CD8-positive, alpha-beta T cell (primary cell): ENCODE measurements at regions of chr6 and their contacts with region 1.

Region 1: GRCh38 chr6:108526739-108527174 is 34.0 kb upstream of the FOXO3 start:
- DNase-seq: peak in 2 of 9 experiments; percentile 36 to 56
- ATAC-seq: peak; percentile 38
- H3K4me3 ChIP-seq: no peak overlapping the region
- H3K4me3 Mint-ChIP-seq: no peak overlapping the region
- H3K27ac ChIP-seq: no peak overlapping the region
- H3K27ac Mint-ChIP-seq: no peak overlapping the region
- H3K4me1 ChIP-seq: no peaks in the 10 kb centered on the region
- H3K4me1 Mint-ChIP-seq: no peaks in the 10 kb centered on the region
- H3K27me3 ChIP-seq: no peaks in the 10 kb centered on the region
- H3K27me3 Mint-ChIP-seq: no peaks in the 10 kb centered on the region
- CTCF ChIP-seq: peak; percentile 63

Region 2: DNA sequence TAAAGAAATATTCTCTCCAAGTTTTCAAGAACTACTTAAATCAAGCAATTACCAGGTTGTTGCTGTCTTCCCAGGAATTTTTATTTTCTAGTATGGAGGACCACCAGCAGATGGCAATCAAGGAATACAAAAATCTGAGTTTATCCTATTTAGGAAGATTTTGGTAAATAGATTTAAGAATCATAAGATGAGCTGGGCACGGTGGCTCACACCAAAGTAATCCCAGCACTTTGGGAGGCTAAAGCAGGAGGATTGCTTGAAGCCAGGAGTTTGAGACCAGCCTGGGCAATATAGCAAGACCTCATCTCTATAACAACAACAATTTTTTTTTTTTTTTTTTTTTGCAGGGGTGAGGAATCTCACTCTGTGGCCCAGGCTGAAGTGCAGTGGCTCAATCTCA is 549.5 kb before region 1 on chr6:
- CTCF ChIA-PET with region 1: interaction called, 4 read pairs
- POLR2A ChIA-PET with region 1: no interaction called
- intact Hi-C with region 1: loop called in 1 of 2 experiments (anchors 5 kb)
- DNase-seq: peak in 1 of 9 experiments; percentile 22
- ATAC-seq: no peak
- H3K4me3 ChIP-seq: no peak overlapping the region
- H3K4me3 Mint-ChIP-seq: no peak overlapping the region
- H3K27ac ChIP-seq: no peak overlapping the region
- H3K27ac Mint-ChIP-seq: no peak overlapping the region
- H3K4me1 ChIP-seq: no peaks in the 10 kb centered on the region
- H3K4me1 Mint-ChIP-seq: peaks cover 2% of the 10 kb centered on the region
- H3K27me3 ChIP-seq: no peaks in the 10 kb centered on the region
- H3K27me3 Mint-ChIP-seq: peaks cover 4% of the 10 kb centered on the region
- CTCF ChIP-seq: no peak

Region 3: GRCh38 chr6:108113557-108114519 is 412.9 kb before region 1 on chr6:
- CTCF ChIA-PET with region 1: interaction called, 7 read pairs
- POLR2A ChIA-PET with region 1: no interaction called
- intact Hi-C with region 1: loop called in 1 of 2 experiments (anchors 1 kb)
- DNase-seq: peak in 2 of 9 experiments; percentile 43 to 49
- ATAC-seq: no peak
- H3K4me3 ChIP-seq: peak overlapping the region in 1 of 2 experiments; percentile 29
- H3K4me3 Mint-ChIP-seq: peak overlapping the region; percentile 64
- H3K27ac ChIP-seq: no peak overlapping the region
- H3K27ac Mint-ChIP-seq: no peak overlapping the region
- H3K4me1 ChIP-seq: peaks cover 40% of the 10 kb centered on the region
- H3K4me1 Mint-ChIP-seq: peaks cover 41% of the 10 kb centered on the region
- H3K27me3 ChIP-seq: peaks cover 36 to 43% of the 10 kb centered on the region in 2 experiments
- H3K27me3 Mint-ChIP-seq: peaks cover 74% of the 10 kb centered on the region
- CTCF ChIP-seq: peak; percentile 50

Region 4: DNA sequence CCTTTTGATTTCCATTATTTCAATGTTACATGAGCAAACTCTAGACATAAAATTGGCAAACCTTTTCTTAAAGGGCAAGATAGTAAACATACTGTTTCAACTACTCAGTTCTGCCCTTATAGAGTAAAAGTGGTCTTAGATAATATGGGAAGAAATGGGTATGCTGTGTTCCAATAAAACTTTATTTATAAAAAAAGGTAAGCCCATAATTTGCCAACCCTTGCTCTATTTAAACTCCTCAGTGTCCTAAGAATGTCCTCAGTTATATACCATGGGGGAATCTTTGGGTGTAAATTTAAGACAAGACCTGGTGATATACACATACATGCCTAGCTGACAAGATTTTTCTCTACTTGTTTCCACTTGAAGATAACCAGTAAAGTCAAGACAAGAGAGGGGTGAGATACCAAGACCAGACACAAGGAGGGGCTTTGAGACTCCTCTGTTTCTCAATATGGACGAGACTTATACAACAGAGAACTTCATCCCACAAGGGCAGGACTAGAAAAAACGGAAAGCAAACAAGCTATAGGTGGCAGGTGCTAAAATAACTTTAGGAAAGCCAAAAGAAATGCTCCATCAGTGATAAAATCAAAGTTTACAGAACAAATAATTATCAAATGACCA is 276.4 kb before region 1 on chr6:
- CTCF ChIA-PET with region 1: no interaction called
- POLR2A ChIA-PET with region 1: interaction called, 3 read pairs
- intact Hi-C with region 1: loop called in 1 of 2 experiments (anchors 2 kb)
- DNase-seq: peak in 2 of 9 experiments; percentile 22 to 48
- ATAC-seq: peak; percentile 57
- H3K4me3 ChIP-seq: no peak overlapping the region
- H3K4me3 Mint-ChIP-seq: no peak overlapping the region
- H3K27ac ChIP-seq: no peak overlapping the region
- H3K27ac Mint-ChIP-seq: no peak overlapping the region
- H3K4me1 ChIP-seq: peaks cover 6% of the 10 kb centered on the region
- H3K4me1 Mint-ChIP-seq: peaks cover 57% of the 10 kb centered on the region
- H3K27me3 ChIP-seq: no peaks in the 10 kb centered on the region
- H3K27me3 Mint-ChIP-seq: no peaks in the 10 kb centered on the region
- CTCF ChIP-seq: no peak

Region 5: DNA sequence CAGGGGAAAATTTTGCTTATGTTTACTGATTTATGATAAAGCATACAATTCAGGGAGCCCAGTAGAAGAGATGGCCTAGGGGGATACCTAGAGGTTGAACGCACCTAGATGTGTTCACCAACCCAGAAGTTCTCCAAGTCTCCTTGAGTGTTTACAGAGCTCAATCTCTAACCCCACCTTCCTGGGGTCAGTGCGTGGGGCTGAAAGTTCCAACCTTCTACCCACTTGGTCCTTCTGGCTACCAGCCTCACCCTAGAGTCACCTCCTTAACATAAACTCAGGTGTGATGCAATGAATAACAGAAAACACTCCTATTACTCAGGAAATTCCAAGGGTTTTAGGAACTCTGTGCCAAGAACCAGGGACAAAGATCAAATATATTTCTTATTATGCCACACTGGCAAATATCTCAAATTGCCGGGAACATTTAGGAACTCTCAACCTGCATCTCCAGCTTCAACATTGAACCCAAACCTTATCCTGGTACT is 205.5 kb before region 1 on chr6:
- CTCF ChIA-PET with region 1: no interaction called
- POLR2A ChIA-PET with region 1: no interaction called
- intact Hi-C with region 1: no loop called
- DNase-seq: no peak
- ATAC-seq: no peak
- H3K4me3 ChIP-seq: no peak overlapping the region
- H3K4me3 Mint-ChIP-seq: no peak overlapping the region
- H3K27ac ChIP-seq: no peak overlapping the region
- H3K27ac Mint-ChIP-seq: no peak overlapping the region
- H3K4me1 ChIP-seq: no peaks in the 10 kb centered on the region
- H3K4me1 Mint-ChIP-seq: no peaks in the 10 kb centered on the region
- H3K27me3 ChIP-seq: no peaks in the 10 kb centered on the region
- H3K27me3 Mint-ChIP-seq: no peaks in the 10 kb centered on the region
- CTCF ChIP-seq: no peak

Region 6: GRCh38 chr6:108541838-108542759 is 15.3 kb after region 1 on chr6:
- CTCF ChIA-PET with region 1: interaction called, 10 read pairs
- POLR2A ChIA-PET with region 1: no interaction called
- intact Hi-C with region 1: no loop called
- DNase-seq: peak; percentile 39 to 87 (median 69)
- ATAC-seq: peak; percentile 92
- H3K4me3 ChIP-seq: no peak overlapping the region
- H3K4me3 Mint-ChIP-seq: no peak overlapping the region
- H3K27ac ChIP-seq: no peak overlapping the region
- H3K27ac Mint-ChIP-seq: no peak overlapping the region
- H3K4me1 ChIP-seq: peaks cover 12% of the 10 kb centered on the region
- H3K4me1 Mint-ChIP-seq: peaks cover 16% of the 10 kb centered on the region
- H3K27me3 ChIP-seq: no peaks in the 10 kb centered on the region
- H3K27me3 Mint-ChIP-seq: no peaks in the 10 kb centered on the region
- CTCF ChIP-seq: peak; percentile 95